ENCODE measurements at regions of chr12 and their contacts with region 1.

Region 1: DNA sequence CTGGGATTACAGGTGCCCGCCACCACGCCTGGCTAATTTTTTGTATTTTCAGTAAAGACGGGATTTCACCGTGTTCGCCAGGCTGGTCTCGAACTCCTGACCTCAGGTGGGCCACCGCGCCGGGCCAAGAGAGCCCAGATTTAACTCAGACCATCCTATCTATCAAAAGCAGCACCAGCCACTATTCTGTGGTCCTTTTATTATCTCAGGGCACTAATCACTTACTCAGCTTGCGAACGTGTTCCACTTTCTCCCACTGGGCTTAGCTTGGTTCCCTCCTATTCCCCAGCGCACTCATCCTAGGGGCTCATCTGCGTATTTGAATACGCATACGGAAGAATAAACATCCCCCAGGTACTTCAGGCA is 16.2 kb upstream of the AACS start:
- DNase-seq: no peak
- ATAC-seq: peak; percentile 10
- H3K4me3 ChIP-seq: peak overlapping the region; percentile 78
- H3K27ac ChIP-seq: no peak overlapping the region
- H3K4me1 ChIP-seq: no peaks in the 10 kb centered on the region
- H3K27me3 ChIP-seq: no peaks in the 10 kb centered on the region
- CTCF ChIP-seq: no peak

Region 2: DNA sequence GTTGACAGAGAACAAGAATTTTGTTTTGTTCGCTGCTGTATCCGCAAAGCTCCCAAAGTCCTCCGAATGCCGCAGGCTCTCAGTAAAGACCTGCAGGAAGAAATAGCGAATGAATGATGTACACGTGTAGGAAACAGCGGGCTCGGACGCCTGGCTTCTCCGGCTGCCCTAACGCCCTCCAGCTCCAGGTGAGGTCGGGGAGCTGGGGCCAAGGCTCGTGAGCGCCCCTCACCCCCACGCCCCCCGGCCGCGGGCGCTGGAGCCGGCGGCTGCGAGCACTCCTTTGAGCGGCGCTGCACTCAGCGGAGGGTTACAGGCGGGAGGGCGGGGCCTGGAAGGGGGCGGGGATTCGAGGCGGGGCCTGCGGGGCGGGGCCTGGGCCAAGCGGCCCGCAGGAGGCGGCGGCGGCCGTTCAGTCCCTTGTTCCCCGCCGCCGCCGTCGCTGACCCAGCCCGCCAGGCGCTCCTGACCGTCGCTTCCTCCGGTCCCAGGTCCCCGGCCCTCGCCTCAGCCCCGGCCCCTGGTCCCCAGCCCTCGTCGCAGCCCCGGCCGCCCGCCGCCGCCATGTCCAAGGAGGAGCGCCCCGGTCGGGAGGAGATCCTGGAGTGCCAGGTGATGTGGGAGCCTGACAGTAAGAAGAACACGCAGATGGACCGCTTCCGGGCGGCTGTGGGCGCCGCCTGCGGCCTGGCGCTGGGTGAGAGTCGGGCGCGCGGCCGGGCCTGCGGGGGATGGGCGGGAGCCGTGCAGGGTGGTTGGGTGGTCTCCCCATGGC is 16.1 kb after region 1 on chr12 and contains the start of gene AACS:
- CTCF ChIA-PET with region 1: no interaction called
- POLR2A ChIA-PET with region 1: interaction called, 12 read pairs
- intact Hi-C with region 1: loop called (anchors 1 kb)
- DNase-seq: peak; percentile 72
- ATAC-seq: peak; percentile 92
- H3K4me3 ChIP-seq: peak within 1 kb of the TSS; percentile 98
- H3K27ac ChIP-seq: no peak within 1 kb of the TSS
- H3K4me1 ChIP-seq: peaks cover 22% of the 10 kb centered on the region
- H3K27me3 ChIP-seq: no peaks in the 10 kb centered on the region
- CTCF ChIP-seq: no peak
- total RNA-seq, gene AACS: 31.9 and 37.6 TPM in 2 replicates

Measured in PC-3 (cell line).